ENCODE measurements at regions of chr3 and their contacts with region 1.

Region 1: DNA sequence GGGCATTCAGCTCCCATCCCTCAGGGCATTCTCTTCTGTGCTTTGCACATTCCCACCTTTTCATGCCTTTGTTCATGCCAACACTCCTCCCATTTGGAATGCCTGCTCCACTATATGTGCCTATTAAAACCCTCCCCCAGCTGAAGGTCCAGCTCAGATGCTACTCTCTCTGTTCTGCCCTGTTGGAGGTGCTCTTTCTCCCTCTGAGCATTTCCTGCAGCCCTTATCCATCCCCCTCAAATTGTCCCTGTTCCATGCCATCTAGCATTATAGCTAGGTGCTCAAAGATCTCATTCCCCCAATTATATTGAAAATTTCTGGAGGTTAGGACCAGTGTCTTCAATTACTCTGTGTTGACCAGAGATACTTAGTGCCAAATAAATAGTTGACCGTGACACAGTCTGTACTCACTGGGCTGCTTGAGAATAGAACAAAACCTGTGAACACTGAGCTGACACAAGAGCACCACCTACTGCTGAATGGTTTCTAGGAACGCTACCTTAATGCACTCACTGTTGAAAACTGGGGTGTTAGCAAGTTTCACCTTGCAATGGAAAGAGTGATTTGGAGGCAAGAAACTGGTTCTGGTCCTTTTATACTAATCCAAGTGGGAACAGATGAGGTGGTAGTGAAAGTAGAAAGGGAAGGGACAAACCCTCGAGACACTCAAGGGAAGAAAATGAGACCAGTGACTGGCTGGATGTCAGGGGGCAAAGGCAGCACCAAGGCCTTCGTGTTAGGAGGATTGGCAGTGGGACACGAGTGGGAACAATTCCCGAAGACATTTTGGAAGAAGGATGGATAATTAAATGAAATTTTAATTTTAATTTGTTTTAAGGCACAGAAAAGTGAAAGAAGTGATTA is 289.8 kb upstream of the ROPN1 start:
- DNase-seq: peak in 1 of 2 donors; percentile 56
- ATAC-seq: peak; percentile 44 to 72 (median 56)
- H3K4me3 ChIP-seq: no peak overlapping the region
- H3K27ac ChIP-seq: peak overlapping the region in 4 of 10 donors; percentile 55 to 74 (median 68)
- H3K4me1 ChIP-seq: peaks cover 8 to 87% (median 52%) of the 10 kb centered on the region in 9 donors
- H3K27me3 ChIP-seq: no peaks in the 10 kb centered on the region
- CTCF ChIP-seq: peak; percentile 44 to 80 (median 68)

Region 2: DNA sequence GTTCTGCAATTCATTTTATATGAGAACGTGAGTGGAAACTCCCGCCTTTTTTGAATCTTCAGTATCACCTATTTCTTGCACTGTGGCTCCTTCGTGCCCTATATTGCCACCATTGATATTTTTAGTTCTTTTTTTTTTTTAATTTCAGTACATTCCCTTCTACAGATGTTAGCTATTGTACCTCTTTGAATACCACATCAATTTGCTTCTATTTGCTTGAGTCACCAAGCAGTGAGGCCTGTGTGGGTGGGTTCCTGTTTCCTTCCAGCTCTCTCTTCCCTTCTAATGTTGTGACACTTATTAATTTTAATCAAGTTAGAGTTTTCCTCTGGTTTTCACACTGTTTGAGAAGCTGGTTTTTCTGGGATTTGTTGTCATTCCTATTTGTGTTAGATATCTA is 705.6 kb before region 1 on chr3:
- intact Hi-C with region 1: no loop called
- DNase-seq: no peak
- ATAC-seq: no peak
- H3K4me3 ChIP-seq: no peak overlapping the region
- H3K27ac ChIP-seq: peak overlapping the region in 1 of 10 donors; percentile 34
- H3K4me1 ChIP-seq: peaks cover 0 to 16% (median 0%) of the 10 kb centered on the region in 9 donors
- H3K27me3 ChIP-seq: no peaks in the 10 kb centered on the region
- CTCF ChIP-seq: no peak

Region 3: GRCh38 chr3:124014366-124014942 is 267.2 kb before region 1 on chr3:
- intact Hi-C with region 1: loop called in 9 of 10 experiments (anchors 1 to 5 kb)
- DNase-seq: no peak
- ATAC-seq: peak in 1 of 8 donors; percentile 37
- H3K4me3 ChIP-seq: no peak overlapping the region
- H3K27ac ChIP-seq: no peak overlapping the region
- H3K4me1 ChIP-seq: peaks cover 0 to 14% (median 0%) of the 10 kb centered on the region in 9 donors
- H3K27me3 ChIP-seq: no peaks in the 10 kb centered on the region
- CTCF ChIP-seq: no peak

Region 4: GRCh38 chr3:124032648-124033359 is 248.9 kb before region 1 on chr3:
- intact Hi-C with region 1: loop called in 7 of 10 experiments (anchors 1 to 5 kb)
- DNase-seq: peak; percentile 88 to 90
- ATAC-seq: peak; percentile 91 to 96 (median 95)
- H3K4me3 ChIP-seq: peak overlapping the region; percentile 69 to 96 (median 92)
- H3K27ac ChIP-seq: peak overlapping the region; percentile 87 to 97 (median 92)
- H3K4me1 ChIP-seq: peaks cover 0 to 27% (median 18%) of the 10 kb centered on the region in 9 donors
- H3K27me3 ChIP-seq: peaks cover 0 to 86% (median 0%) of the 10 kb centered on the region in 7 donors
- CTCF ChIP-seq: peak; percentile 62 to 86 (median 82)

Region 5: DNA sequence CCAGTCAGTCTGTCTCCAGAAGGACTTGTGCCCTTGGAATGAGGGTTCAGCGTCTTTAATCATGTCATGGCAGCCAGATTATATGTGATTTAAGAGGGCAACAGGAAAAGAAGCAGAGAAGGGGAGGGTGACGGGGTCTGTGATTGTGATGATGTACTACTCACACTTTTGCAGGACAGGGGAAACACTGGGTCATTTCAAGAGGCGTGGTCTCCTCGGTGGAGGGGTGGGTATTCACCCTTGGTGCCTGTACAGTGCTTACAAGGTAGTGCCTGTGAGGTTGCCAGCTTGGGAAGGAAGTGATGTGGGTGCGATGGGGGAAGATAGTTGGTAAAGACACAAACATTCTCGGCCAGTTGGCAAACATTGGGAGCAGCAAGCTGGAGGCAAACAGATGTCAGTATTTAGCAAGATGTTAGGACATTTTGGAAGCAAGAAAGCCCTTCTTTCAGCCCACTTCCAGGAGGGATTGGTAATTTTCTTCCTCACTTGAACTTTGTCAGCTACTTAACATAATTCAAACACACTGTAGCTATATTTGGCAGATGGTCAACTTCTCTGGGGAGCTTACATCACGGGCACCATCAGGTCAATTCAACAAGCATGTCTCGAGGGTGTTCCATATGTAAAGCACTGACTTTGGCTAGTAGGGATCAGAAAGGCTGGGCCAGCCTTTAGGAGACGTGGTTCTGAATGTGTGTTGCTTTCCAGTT is 218.3 kb before region 1 on chr3:
- intact Hi-C with region 1: no loop called
- DNase-seq: no peak
- ATAC-seq: peak in 5 of 8 donors; percentile 18 to 46 (median 31)
- H3K4me3 ChIP-seq: no peak overlapping the region
- H3K27ac ChIP-seq: peak overlapping the region in 1 of 10 donors; percentile 45
- H3K4me1 ChIP-seq: peaks cover 6 to 87% (median 34%) of the 10 kb centered on the region in 9 donors
- H3K27me3 ChIP-seq: no peaks in the 10 kb centered on the region
- CTCF ChIP-seq: no peak

Region 6: GRCh38 chr3:124078953-124079911 is 202.5 kb before region 1 on chr3:
- intact Hi-C with region 1: loop called in 7 of 10 experiments (anchors 2 to 10 kb)
- DNase-seq: no peak
- ATAC-seq: peak in 5 of 8 donors; percentile 36 to 63 (median 54)
- H3K4me3 ChIP-seq: no peak overlapping the region
- H3K27ac ChIP-seq: peak overlapping the region in 4 of 10 donors; percentile 13 to 49 (median 26)
- H3K4me1 ChIP-seq: peaks cover 0 to 63% (median 36%) of the 10 kb centered on the region in 9 donors
- H3K27me3 ChIP-seq: no peaks in the 10 kb centered on the region
- CTCF ChIP-seq: peak; percentile 69 to 87 (median 80)

Region 7: GRCh38 chr3:124084022-124084881 is 197.4 kb before region 1 on chr3:
- intact Hi-C with region 1: loop called in 7 of 10 experiments (anchors 2 to 10 kb)
- DNase-seq: peak in 1 of 2 donors; percentile 55
- ATAC-seq: peak in 7 of 8 donors; percentile 34 to 84 (median 67)
- H3K4me3 ChIP-seq: no peak overlapping the region
- H3K27ac ChIP-seq: peak overlapping the region in 9 of 10 donors; percentile 15 to 51 (median 38)
- H3K4me1 ChIP-seq: peaks cover 0 to 41% (median 16%) of the 10 kb centered on the region in 9 donors
- H3K27me3 ChIP-seq: no peaks in the 10 kb centered on the region
- CTCF ChIP-seq: no peak

Region 8: GRCh38 chr3:124248471-124249028 is 33.1 kb before region 1 on chr3:
- intact Hi-C with region 1: loop called in 3 of 10 experiments (anchors 1 to 2 kb)
- DNase-seq: peak; percentile 52 to 69
- ATAC-seq: peak; percentile 60 to 91 (median 89)
- H3K4me3 ChIP-seq: peak overlapping the region in 1 of 10 donors; percentile 16
- H3K27ac ChIP-seq: peak overlapping the region; percentile 77 to 98 (median 87)
- H3K4me1 ChIP-seq: peaks cover 22 to 58% (median 30%) of the 10 kb centered on the region in 9 donors
- H3K27me3 ChIP-seq: no peaks in the 10 kb centered on the region
- CTCF ChIP-seq: no peak

Measured in heart right ventricle (tissue), 16 donors.